Activated CD4-positive, alpha-beta memory T cell treated with anti-CD3 and anti-CD28 coated beads for 36 hours (primary cell): ENCODE measurements at regions of chr9 and their contacts with region 1.

Region 1: DNA sequence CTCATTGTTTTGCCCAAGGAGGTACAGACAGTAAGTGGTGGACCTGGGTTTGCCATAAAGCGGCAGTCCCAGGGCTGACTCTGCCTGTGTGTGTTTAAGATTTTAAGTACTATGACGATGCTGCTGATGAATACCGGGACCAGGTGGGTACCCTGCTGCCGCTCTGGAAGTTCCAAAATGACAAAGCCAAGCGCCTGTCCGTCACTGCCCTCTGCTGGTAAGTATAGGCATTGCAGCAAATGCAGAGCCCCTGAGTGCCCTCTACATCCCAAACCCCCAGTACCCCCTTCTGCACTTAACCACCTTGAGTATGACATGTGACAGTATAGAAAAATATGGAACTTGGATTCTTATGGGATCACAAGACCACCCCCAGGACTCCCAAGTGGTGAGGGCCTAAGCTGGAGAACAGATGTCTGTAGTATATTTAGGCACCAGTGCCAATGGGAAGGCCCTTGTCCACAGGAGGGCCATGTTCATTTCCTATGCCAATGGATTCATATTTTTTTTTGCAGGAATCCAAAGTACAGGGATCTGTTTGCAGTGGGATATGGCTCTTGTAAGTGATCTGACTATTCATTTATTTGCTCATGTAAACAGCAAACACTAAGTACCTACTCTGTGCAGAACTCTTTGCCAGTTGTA is 22.0 kb downstream of the ENHO start:
- DNase-seq: peak; percentile 89
- H3K4me3 Mint-ChIP-seq: no peak overlapping the region
- H3K27ac Mint-ChIP-seq: no peak overlapping the region
- H3K4me1 Mint-ChIP-seq: peaks cover 14% of the 10 kb centered on the region
- H3K27me3 Mint-ChIP-seq: no peaks in the 10 kb centered on the region

Region 2: DNA sequence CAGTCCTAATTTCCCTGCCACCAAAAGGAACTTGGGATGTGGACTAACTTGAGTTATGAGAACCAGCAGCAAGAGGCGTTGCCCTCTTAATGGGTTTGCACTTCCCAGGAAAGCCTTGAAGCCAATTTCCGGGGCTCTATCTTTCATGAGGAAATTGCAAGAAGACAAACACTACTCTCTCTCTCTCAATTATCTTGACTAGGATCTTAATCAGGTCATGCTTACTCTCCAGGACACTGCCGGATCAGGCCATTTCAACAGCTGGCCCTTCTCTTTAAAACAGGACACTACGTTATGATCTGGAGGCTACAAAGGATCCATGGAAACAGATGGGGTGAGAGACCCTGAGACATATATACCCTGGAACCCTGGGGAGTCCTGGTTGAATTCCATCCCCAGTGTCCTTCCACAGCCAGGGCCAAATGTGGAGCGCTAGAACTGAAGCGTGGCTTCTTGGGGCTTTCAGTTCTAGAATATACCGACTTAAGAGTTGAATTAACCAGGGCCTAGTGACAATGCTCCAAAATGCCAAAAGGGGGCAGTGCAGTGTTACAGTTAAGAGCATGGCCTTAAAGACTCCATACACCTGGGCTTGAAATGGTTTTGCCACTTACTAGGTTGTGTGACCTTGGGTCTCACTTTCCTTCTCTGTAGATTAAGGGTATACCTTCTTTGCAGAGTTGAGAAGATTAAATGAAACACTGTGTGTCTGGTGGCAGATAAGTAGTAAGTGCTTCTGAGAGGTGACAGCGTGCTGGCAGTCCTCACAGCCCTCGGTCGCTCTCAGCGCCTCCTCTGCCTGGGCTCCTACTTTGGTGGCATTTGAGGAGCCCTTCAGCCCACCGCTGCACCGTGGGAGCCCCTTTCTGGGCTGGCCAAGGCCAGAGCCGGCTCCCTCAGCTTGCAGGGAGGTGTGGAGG is 63.5 kb before region 1 on chr9:
- CTCF ChIA-PET with region 1: interaction called, 76 read pairs
- POLR2A ChIA-PET with region 1: interaction called, 3 read pairs
- intact Hi-C with region 1: loop called (anchors 1 kb)
- DNase-seq: peak; percentile 70
- H3K4me3 Mint-ChIP-seq: no peak overlapping the region
- H3K27ac Mint-ChIP-seq: no peak overlapping the region
- H3K4me1 Mint-ChIP-seq: peaks cover 8% of the 10 kb centered on the region
- H3K27me3 Mint-ChIP-seq: no peaks in the 10 kb centered on the region

Region 3: DNA sequence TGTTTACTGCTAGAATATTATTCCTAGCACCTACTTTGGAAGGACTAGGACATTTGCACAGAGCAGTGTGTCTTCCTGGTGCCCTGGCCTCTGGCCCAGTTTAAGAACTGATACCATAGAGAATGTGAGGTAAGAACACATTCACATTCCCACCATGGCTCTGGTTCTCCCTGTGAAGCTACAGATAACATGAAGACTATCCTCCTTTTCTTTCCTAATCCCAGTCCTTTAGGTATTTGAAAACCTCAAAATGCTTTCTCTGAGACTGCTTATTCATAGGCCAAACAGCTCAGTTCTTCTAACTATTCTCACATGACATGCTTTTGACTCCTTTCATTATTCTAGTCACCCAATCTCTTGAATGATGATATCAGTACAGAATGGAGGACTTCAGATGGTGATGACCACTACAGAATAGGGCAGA is 54.3 kb before region 1 on chr9:
- CTCF ChIA-PET with region 1: interaction called, 76 read pairs
- POLR2A ChIA-PET with region 1: no interaction called
- intact Hi-C with region 1: no loop called
- DNase-seq: no peak
- H3K4me3 Mint-ChIP-seq: no peak overlapping the region
- H3K27ac Mint-ChIP-seq: no peak overlapping the region
- H3K4me1 Mint-ChIP-seq: peaks cover 6% of the 10 kb centered on the region
- H3K27me3 Mint-ChIP-seq: no peaks in the 10 kb centered on the region

Region 4: DNA sequence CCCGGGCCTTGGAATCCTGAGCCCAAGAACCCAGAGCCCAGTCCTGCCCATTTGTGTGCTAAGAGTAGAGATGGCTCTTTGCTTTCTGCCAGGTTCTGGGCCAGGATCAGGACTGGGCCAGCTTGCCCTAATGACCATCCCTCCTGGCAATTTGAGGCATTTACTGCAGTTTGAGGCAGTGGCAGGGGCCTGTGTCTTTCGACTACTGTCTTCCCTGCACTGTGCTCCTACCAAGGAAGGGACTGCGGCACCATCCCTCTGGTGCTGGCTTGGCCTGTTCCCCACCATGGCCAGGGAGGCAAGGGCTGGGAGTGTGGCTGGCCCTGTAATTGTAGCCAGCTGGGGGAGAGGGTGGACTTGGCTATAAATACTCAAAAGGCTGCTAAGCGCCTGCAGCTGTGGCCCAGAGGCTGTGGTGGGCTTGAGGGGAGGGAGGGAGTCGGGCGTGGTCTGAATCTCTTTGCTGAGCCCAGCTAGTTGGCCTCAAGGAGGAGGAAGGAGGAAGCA is 17.4 kb after region 1 on chr9:
- CTCF ChIA-PET with region 1: no interaction called
- POLR2A ChIA-PET with region 1: no interaction called
- intact Hi-C with region 1: no loop called
- DNase-seq: no peak
- H3K4me3 Mint-ChIP-seq: no peak overlapping the region
- H3K27ac Mint-ChIP-seq: no peak overlapping the region
- H3K4me1 Mint-ChIP-seq: peaks cover 4% of the 10 kb centered on the region
- H3K27me3 Mint-ChIP-seq: peaks cover 4% of the 10 kb centered on the region

Region 5: GRCh38 chr9:34546834-34547827 is 46.4 kb after region 1 on chr9:
- CTCF ChIA-PET with region 1: interaction called, 10 read pairs
- POLR2A ChIA-PET with region 1: no interaction called
- intact Hi-C with region 1: no loop called
- DNase-seq: peak; percentile 77
- H3K4me3 Mint-ChIP-seq: no peak overlapping the region
- H3K27ac Mint-ChIP-seq: no peak overlapping the region
- H3K4me1 Mint-ChIP-seq: no peaks in the 10 kb centered on the region
- H3K27me3 Mint-ChIP-seq: peaks cover 9% of the 10 kb centered on the region

Region 6: DNA sequence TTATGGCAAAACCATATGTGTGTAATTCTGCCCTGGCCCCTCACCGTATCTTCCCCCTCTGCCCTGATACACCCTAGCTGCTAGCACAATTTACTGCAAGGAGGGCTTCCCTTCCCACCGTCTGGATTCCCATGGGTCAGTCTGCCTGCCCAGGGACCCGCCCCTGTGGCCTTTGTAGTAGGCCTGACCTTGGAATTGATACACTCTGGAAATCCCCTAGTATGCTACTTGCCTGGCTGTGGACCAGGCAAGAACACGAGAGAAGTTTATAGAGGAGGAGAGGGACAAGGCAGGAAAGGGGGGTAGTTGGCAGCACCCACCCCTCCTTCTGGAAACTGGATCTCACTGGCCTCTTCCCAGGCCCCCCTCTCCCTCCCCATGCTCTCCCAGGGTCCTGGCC is 325.0 kb after region 1 on chr9:
- CTCF ChIA-PET with region 1: no interaction called
- POLR2A ChIA-PET with region 1: no interaction called
- intact Hi-C with region 1: no loop called
- DNase-seq: no peak
- H3K4me3 Mint-ChIP-seq: no peak overlapping the region
- H3K27ac Mint-ChIP-seq: no peak overlapping the region
- H3K4me1 Mint-ChIP-seq: no peaks in the 10 kb centered on the region
- H3K27me3 Mint-ChIP-seq: peaks cover 14% of the 10 kb centered on the region